ENCODE measurements at regions of chr16 and their contacts with region 1.

Region 1: DNA sequence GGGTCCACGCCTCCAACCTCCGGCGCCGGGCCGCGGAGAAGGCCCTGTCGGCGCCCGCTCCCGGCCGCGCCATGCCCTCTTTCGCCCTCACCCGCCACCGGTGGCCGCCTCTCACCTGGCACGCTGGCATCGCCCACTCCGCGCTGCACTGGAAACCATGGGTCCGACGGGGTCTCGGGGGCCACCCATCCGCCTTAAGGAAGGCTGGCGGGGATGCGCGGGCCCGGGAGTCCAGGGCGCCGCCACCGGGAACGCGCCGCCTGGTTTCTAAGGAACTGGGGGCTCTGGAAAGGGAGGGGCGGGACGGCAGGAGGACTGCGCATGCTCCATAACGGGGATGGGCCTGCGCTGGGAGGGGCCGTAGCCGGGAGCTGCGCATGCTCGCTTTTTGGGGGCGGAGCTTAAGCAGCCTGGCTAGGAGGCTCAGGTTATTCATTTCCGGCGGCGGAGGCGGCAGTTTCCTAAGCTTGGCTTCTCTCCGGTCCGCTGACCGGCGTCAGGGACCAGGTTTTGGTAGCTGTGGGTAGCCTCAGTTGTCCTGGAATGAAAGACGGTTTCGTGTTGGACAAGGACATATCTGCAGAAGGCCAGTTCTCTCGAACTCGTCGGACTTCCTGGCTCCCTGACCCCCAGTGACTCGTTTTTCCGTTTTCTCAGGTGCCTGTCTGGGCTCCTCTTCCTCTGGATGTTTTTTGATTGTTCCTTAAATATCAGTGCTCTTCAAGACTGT is at the start of gene GFOD2:
- DNase-seq: peak; percentile 89 to 100
- H3K4me3 ChIP-seq: peak within 1 kb of the TSS; percentile 84 to 91 (median 90)
- H3K27ac ChIP-seq: 0 out of 2 replicates have a peak within 1 kb of the TSS, but pooled peaks have one; percentile 6
- H3K4me1 ChIP-seq: peaks cover 0 to 10% (median 5%) of the 10 kb centered on the region in 4 experiments; a peak in 4 of 7 replicates
- H3K27me3 ChIP-seq: no peaks in the 10 kb centered on the region; a peak in 1 of 7 replicates
- CTCF ChIP-seq: peak in 1 of 3 experiments; percentile 6; a peak in 1 of 4 replicates
- EP300 ChIP-seq: no peak
- POLR2A ChIP-seq: peak in 1 of 2 experiments; percentile 68; a peak in 2 of 3 replicates
- RAD21 ChIP-seq: no peak
- total RNA-seq, gene GFOD2: 33.2 and 35.4 TPM in 2 replicates

Region 2: DNA sequence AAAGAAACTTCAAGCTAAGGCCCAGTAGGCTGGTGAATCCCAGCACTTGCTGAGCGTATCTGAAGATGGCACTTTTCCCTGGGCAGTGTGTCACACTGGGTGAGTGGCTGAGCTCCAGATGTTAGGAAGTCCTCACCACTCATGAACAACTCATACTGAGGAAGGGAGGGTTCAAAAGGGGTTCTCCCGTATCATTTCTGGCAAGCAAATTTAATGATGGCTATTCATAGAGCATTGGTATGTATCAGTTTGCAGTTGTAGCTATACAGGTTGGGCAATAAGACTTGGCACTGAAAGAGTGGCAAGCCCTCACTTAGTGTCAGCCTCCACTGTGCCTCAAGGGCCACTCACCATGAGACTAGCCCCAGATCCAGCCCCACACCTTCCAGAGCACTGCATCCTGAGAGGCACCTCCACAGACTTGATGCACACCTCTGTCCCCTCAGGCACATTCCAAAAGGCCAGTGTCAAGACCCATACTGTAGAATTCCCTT is 10.8 kb before region 1 on chr16:
- CTCF ChIA-PET with region 1: no interaction called
- POLR2A ChIA-PET with region 1: interaction called, 16 read pairs
- DNase-seq: no peak
- H3K4me3 ChIP-seq: no peak overlapping the region
- H3K27ac ChIP-seq: no peak overlapping the region
- H3K4me1 ChIP-seq: peaks cover 0 to 7% (median 3%) of the 10 kb centered on the region in 4 experiments; a peak in 2 of 7 replicates
- H3K27me3 ChIP-seq: no peaks in the 10 kb centered on the region
- CTCF ChIP-seq: no peak
- EP300 ChIP-seq: no peak
- POLR2A ChIP-seq: no peak
- RAD21 ChIP-seq: no peak

Region 3: DNA sequence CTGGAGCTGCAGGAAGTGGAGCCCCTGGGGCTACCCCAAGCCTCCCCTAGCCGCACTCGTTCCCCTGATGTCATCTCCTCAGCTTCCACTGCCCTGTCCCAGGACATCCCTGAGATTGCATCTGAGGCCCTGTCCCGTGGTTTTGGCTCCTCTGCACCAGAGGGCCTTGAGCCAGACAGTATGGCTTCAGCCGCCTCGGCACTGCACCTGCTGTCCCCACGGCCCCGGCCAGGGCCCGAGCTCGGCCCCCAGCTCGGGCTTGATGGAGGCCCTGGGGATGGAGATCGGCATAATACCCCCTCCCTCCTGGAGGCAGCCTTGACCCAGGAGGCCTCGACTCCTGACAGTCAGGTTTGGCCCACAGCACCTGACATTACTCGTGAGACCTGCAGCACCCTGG is 161.4 kb after region 1 on chr16:
- CTCF ChIA-PET with region 1: no interaction called
- POLR2A ChIA-PET with region 1: no interaction called
- DNase-seq: no peak
- H3K4me3 ChIP-seq: no peak overlapping the region
- H3K27ac ChIP-seq: no peak overlapping the region
- H3K4me1 ChIP-seq: peaks cover 5 to 11% (median 7%) of the 10 kb centered on the region in 4 experiments; a peak in 6 of 7 replicates
- H3K27me3 ChIP-seq: no peaks in the 10 kb centered on the region
- CTCF ChIP-seq: no peak
- EP300 ChIP-seq: no peak
- POLR2A ChIP-seq: no peak
- RAD21 ChIP-seq: no peak